Heart right ventricle (tissue), 16 donors: ENCODE measurements at regions of chr1 and their contacts with region 1.

Region 1: GRCh38 chr1:28259307-28260167 is at the start of gene SESN2:
- DNase-seq: peak; percentile 99
- ATAC-seq: peak; percentile 96 to 99 (median 98)
- H3K4me3 ChIP-seq: peak within 1 kb of the TSS; percentile 87 to 100 (median 98)
- H3K27ac ChIP-seq: peak within 1 kb of the TSS; percentile 47 to 94 (median 86)
- H3K4me1 ChIP-seq: peaks cover 0 to 46% (median 19%) of the 10 kb centered on the region in 9 donors
- H3K27me3 ChIP-seq: no peaks in the 10 kb centered on the region
- CTCF ChIP-seq: peak in 1 of 9 donors; percentile 11
- total RNA-seq, gene SESN2: 1.9 to 6.0 (median 3.6) TPM

Region 2: DNA sequence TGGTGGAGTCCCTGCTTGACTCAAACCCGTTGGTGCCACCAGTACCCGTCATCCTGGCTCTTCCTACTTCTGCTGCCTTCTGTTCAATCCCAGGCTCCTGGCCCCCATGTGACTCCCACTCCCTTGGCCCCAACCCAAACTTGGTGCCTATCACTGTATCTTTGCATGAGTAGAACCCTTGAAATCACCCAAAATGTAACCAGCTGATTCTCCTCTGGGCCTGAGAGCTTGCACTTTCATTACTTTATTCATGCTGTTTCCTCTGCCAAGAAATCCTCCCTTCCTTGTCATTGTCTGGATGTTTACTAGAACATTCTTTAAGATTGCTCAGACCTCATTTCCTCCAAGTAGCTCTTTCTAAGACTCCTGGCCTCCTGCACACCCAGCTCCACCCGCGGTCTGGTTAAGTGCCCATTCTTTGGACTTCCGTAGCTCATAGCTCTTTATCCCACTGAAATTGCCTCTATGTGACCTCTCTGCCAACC is 98.7 kb before region 1 on chr1:
- intact Hi-C with region 1: no loop called
- DNase-seq: no peak
- ATAC-seq: peak; percentile 30 to 84 (median 80)
- H3K4me3 ChIP-seq: no peak overlapping the region
- H3K27ac ChIP-seq: peak overlapping the region; percentile 27 to 79 (median 68)
- H3K4me1 ChIP-seq: peaks cover 0 to 83% (median 4%) of the 10 kb centered on the region in 9 donors
- H3K27me3 ChIP-seq: no peaks in the 10 kb centered on the region
- CTCF ChIP-seq: no peak

Region 3: GRCh38 chr1:28329395-28330153 is 70.0 kb after region 1 on chr1:
- intact Hi-C with region 1: loop called in 3 of 10 experiments (anchors 5 to 10 kb)
- DNase-seq: peak in 1 of 2 donors; percentile 14
- ATAC-seq: peak in 5 of 8 donors; percentile 21 to 60 (median 32)
- H3K4me3 ChIP-seq: peak overlapping the region; percentile 46 to 88 (median 67)
- H3K27ac ChIP-seq: peak overlapping the region; percentile 30 to 93 (median 84)
- H3K4me1 ChIP-seq: peaks cover 3 to 31% (median 13%) of the 10 kb centered on the region in 9 donors
- H3K27me3 ChIP-seq: no peaks in the 10 kb centered on the region
- CTCF ChIP-seq: no peak

Region 4: GRCh38 chr1:28369371-28370238 is 110.1 kb after region 1 on chr1 and contains the start of gene PHACTR4:
- intact Hi-C with region 1: loop called in 2 of 10 experiments (anchors 1 to 10 kb)
- DNase-seq: peak; percentile 92 to 93
- ATAC-seq: peak; percentile 98 to 99 (median 99)
- H3K4me3 ChIP-seq: peak within 1 kb of the TSS; percentile 51 to 98 (median 80)
- H3K27ac ChIP-seq: peak within 1 kb of the TSS; percentile 76 to 98 (median 93)
- H3K4me1 ChIP-seq: peaks cover 0 to 32% (median 18%) of the 10 kb centered on the region in 9 donors
- H3K27me3 ChIP-seq: no peaks in the 10 kb centered on the region
- CTCF ChIP-seq: peak in 1 of 9 donors; percentile 12
- total RNA-seq, gene PHACTR4: 14.0 to 24.9 (median 18.5) TPM

Region 5: DNA sequence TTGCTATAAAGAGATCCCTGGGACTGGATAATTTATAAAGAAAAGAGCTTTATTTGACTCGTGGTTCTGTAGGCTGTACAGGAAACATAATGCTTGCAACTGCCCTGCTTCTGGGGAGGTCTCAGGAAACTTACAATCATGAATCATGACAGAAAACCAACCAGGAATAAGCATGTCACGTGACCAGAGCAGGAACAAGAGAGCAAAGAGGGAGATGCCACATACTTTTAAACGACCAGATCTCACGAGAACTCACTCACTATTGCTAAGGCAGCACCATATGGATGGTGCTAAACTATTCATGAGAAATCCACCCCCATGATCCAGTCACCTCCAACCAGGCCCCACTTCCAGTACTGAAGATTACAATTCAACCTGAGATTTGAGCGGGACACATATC is 196.5 kb after region 1 on chr1:
- intact Hi-C with region 1: loop called in 1 of 10 experiments (anchors 10 kb)
- DNase-seq: peak in 1 of 2 donors; percentile 23
- ATAC-seq: peak in 5 of 8 donors; percentile 28 to 53 (median 43)
- H3K4me3 ChIP-seq: no peak overlapping the region
- H3K27ac ChIP-seq: peak overlapping the region in 9 of 10 donors; percentile 38 to 76 (median 58)
- H3K4me1 ChIP-seq: peaks cover 9 to 63% (median 42%) of the 10 kb centered on the region in 9 donors
- H3K27me3 ChIP-seq: no peaks in the 10 kb centered on the region
- CTCF ChIP-seq: no peak